ENCODE measurements at regions of chr1 and their contacts with region 1.

Region 1: GRCh38 chr1:233477359-233477758 is 136.5 kb upstream of the KCNK1 start:
- DNase-seq: no peak
- H3K4me3 ChIP-seq: no peak overlapping the region
- H3K27ac ChIP-seq: no peak overlapping the region
- H3K4me1 ChIP-seq: no peaks in the 10 kb centered on the region
- H3K27me3 ChIP-seq: no peaks in the 10 kb centered on the region
- CTCF ChIP-seq: no peak

Region 2: DNA sequence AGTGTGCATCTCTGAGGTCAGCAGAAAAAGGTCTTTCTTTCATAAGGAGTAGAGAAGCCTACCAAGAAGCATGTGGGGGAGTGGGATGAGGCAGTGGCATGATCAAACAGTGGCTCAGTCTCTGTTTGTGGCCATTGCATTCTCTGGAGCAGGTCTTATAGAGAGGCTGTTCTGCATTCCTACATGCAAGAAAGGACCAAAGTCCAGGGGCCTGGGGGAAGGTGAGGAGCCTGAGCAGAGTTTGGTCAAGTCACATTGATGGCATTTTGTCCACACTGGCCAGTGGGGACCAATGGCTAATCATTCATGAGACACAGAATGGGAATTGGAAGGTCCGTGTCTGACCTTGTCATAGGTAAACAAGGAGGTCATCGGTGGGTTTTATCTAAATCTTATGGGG is 646.7 kb before region 1 on chr1:
- intact Hi-C with region 1: no loop called
- DNase-seq: no peak
- H3K4me3 ChIP-seq: no peak overlapping the region
- H3K27ac ChIP-seq: no peak overlapping the region
- H3K4me1 ChIP-seq: no peaks in the 10 kb centered on the region
- H3K27me3 ChIP-seq: no peaks in the 10 kb centered on the region
- CTCF ChIP-seq: no peak

Region 3: DNA sequence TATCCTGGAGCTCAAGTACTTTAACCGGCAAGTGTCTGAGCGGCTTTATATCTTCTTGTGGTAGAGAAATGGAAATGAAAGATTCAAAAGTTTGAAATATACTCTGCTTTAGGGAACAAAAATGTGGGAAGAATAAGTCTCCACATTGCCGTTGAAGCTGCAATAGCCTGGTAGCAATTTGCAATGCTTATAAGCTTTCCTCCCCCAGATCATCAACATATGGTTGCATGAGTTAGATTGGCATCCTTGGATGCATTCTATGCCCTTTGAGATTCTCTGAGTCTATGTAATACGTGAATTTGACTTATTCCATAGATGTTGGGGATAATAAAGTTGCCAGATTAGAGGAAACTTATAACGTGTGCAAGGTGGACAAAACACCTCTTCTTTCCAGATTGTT is 50.5 kb after region 1 on chr1:
- intact Hi-C with region 1: loop called (anchors 5 kb)
- DNase-seq: no peak
- H3K4me3 ChIP-seq: no peak overlapping the region
- H3K27ac ChIP-seq: no peak overlapping the region
- H3K4me1 ChIP-seq: no peaks in the 10 kb centered on the region
- H3K27me3 ChIP-seq: no peaks in the 10 kb centered on the region
- CTCF ChIP-seq: no peak